MCF 10A (cell line): ENCODE measurements at regions of chr16 and their contacts with region 1.

Region 1: DNA sequence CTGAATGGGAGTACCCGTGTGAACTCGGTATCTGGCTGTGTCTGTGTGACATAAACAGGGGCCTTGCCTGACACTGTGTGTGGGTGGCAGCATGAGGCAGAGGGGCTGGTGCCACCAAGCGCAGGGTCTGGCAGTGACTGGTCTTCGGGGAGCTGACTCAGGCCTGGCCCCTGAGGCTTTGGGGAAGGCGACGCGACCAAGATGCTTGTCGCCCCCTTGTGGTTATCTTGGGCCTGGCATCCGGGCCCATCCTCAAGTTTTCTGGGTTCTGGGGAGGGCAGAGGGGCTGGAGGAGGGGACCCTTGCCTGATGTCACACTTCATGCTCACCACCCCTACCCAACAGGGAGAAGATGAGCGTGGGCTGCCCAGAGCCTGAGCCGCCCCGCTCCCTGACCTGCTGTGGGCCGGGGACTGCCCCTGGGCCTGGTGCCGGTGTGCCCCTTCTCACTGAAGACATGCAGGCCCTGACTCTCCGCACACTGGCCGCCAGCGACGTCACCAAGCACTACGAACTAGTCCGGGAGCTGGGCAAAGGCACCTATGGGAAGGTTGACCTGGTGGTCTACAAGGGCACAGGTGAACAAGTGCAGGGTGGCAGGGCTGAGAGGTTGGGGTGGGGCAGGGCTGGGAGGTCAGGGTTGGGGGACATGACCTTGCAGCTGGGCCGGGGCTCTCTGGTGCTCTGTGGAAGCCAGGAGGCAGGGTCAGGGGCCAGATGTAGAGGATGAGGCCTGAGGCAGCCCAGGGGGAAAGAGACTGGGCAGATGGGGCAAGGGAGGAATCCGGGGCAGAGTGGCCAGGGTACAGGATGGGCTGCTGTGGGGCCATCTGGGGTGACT is 24.9 kb downstream of the SBK1 start:
- DNase-seq: peak; percentile 52
- H3K4me3 Mint-ChIP-seq: no peak overlapping the region
- H3K27ac Mint-ChIP-seq: no peak overlapping the region
- H3K4me1 Mint-ChIP-seq: no peaks in the 10 kb centered on the region
- H3K27me3 Mint-ChIP-seq: peaks cover 8% of the 10 kb centered on the region
- CTCF ChIP-seq: peak; percentile 88

Region 2: GRCh38 chr16:28277537-28278388 is 39.5 kb before region 1 on chr16:
- CTCF ChIA-PET with region 1: interaction called, 85 read pairs
- POLR2A ChIA-PET with region 1: interaction called, 3 read pairs
- intact Hi-C with region 1: loop called (anchors 1 kb)
- DNase-seq: peak; percentile 75
- H3K4me3 Mint-ChIP-seq: peak overlapping the region; percentile 60
- H3K27ac Mint-ChIP-seq: no peak overlapping the region
- H3K4me1 Mint-ChIP-seq: peaks cover 9% of the 10 kb centered on the region
- H3K27me3 Mint-ChIP-seq: peaks cover 46% of the 10 kb centered on the region
- CTCF ChIP-seq: peak; percentile 92

Region 3: DNA sequence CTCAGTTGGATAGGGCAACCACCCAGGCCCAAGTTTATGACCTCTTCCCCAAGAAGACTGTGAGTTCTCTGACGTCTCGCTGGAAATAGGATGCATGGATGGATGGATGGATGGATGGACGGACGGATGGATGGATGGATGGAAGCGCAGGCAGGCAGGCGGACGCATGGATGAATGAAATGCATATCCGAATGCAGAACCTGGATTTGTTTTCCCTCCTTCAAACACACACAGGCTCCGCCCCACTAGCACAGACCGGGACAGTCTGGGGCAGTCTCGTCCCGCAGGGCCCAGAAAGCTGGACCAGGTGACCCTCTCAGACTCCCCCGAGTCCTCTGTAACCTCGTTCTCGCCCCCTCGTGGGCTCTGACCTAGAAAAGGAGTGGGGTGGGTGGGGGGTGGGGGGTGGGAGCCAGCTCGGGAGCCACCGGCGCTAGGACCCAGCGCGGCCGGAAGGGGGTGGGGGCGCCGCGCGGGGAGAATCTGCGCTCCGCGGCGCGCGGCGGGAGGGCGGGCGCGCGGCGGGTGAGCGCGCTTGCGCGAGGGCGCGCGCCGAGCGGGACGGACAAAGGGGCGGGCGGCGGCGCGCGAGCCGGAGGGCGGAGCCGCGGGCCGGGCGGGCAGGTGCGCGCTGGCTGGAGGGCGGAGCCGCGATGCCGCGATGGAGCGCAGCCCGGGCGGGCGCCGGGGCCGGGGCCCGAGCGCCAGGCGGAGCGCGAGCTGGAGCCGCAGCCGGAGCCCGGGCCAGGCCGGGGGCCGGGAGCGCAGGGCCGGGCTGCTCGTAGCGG is 25.2 kb before region 1 on chr16 and contains the start of gene SBK1:
- CTCF ChIA-PET with region 1: interaction called, 12 read pairs
- POLR2A ChIA-PET with region 1: no interaction called
- intact Hi-C with region 1: no loop called
- DNase-seq: peak; percentile 62
- H3K4me3 Mint-ChIP-seq: peak within 1 kb of the TSS; percentile 70
- H3K27ac Mint-ChIP-seq: peak within 1 kb of the TSS; percentile 21
- H3K4me1 Mint-ChIP-seq: peaks cover 8% of the 10 kb centered on the region
- H3K27me3 Mint-ChIP-seq: peaks cover 11% of the 10 kb centered on the region
- CTCF ChIP-seq: no peak
- total RNA-seq, gene SBK1: 0.14 and 0.25 TPM in 2 replicates

Region 4: DNA sequence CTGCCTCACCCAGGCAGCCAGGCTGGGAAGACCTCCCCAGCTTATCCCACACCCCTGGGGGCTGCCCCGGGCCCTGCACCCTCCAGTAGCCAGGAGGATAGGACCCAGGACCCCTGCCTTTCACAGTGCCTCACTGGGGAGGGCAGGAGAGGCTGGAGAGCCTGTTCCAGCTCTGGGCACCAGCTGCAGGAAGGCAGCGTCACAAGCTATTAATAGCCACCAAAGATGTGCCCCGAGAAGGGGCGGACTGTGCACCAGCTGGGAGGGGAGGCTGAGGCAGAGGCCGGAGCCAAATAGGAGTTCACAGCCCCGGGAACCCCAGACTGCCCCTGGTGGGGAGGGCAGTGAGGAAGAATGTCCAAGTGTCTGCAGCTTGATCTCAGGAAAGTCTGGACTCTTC is 16.1 kb before region 1 on chr16:
- CTCF ChIA-PET with region 1: interaction called, 11 read pairs
- POLR2A ChIA-PET with region 1: no interaction called
- intact Hi-C with region 1: no loop called
- DNase-seq: no peak
- H3K4me3 Mint-ChIP-seq: no peak overlapping the region
- H3K27ac Mint-ChIP-seq: no peak overlapping the region
- H3K4me1 Mint-ChIP-seq: no peaks in the 10 kb centered on the region
- H3K27me3 Mint-ChIP-seq: peaks cover 24% of the 10 kb centered on the region
- CTCF ChIP-seq: no peak